ENCODE measurements at regions of chr16 and their contacts with region 1.

Region 1: DNA sequence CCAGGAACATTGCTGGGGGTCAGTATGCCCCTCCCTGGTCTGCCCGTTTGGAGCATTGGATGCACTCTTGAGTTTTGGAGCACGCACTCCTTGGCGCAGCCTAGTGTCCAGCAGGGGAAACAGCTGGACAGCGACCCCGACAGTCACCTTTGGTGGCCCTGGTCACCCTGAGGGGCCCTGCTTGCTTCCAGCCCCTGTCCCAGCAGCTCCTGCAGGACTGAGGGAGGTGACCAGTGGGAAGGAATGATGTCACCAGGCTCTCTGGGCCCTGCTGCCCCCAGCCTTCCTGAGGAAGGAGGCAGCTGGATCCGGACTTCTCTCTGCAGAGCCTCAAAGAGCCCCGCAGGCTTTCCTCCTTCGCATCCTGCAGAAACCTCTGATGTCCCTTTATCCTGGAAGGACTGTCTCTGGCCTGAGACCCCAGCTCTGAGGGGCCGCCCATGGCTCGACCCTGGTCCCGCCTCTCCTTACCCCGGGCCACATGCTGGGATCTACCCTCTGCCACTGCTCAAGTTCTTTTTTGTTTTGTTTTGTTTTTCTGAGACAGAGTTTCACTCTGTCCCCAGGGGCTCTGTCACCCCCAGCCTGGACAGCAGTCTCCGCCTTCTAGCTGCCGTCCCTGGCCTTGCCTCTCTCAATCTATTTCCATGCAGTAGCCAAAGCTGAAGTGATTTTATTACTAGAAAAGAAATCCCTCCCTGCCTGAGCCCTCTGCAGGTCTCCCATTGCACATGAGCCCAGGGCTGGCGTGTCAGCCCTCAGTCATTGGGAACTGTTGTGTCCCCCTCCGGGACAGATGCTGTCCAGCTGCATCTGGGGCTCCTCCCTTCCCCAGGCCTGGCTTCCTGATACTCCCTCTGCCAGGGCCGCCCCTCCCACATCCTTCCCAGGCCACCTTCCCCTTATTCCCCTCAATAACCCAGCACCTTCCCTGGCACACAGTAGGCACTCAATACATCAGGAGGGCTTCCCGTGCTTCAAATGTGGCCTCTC is 11.6 kb downstream of the ZSCAN10 start:
- DNase-seq: no peak
- ATAC-seq: peak; percentile 84
- H3K4me3 ChIP-seq: peak overlapping the region; percentile 51 to 79 (median 63)
- H3K27ac ChIP-seq: peak overlapping the region; percentile 59
- H3K4me1 ChIP-seq: peaks cover 46% of the 10 kb centered on the region
- H3K27me3 ChIP-seq: peaks cover 0 to 5% of the 10 kb centered on the region in 2 experiments; a peak in 2 of 5 replicates
- CTCF ChIP-seq: peak; percentile 89
- EP300 ChIP-seq: no peak
- POLR2A ChIP-seq: no peak
- RAD21 ChIP-seq: peak; percentile 36

Region 2: GRCh38 chr16:3065069-3065741 is 22.3 kb before region 1 on chr16 and contains the start of gene IL32:
- CTCF ChIA-PET with region 1: no interaction called
- POLR2A ChIA-PET with region 1: interaction called, 38 read pairs
- in situ Hi-C with region 1: no loop called
- intact Hi-C with region 1: no loop called
- DNase-seq: peak; percentile 87
- ATAC-seq: peak; percentile 77
- H3K4me3 ChIP-seq: peak within 1 kb of the TSS; percentile 57 to 90 (median 71)
- H3K27ac ChIP-seq: peak within 1 kb of the TSS; percentile 82
- H3K4me1 ChIP-seq: peaks cover 37% of the 10 kb centered on the region
- H3K27me3 ChIP-seq: no peaks in the 10 kb centered on the region; a peak in 2 of 5 replicates
- CTCF ChIP-seq: 0 out of 2 replicates have a peak, but pooled peaks have one; percentile 8
- EP300 ChIP-seq: peak in 1 of 2 experiments; percentile 59; a peak in 2 of 4 replicates
- POLR2A ChIP-seq: peak; percentile 72 to 75
- RAD21 ChIP-seq: no peak
- total RNA-seq, gene IL32: 115 and 127 TPM in 2 replicates

Region 3: DNA sequence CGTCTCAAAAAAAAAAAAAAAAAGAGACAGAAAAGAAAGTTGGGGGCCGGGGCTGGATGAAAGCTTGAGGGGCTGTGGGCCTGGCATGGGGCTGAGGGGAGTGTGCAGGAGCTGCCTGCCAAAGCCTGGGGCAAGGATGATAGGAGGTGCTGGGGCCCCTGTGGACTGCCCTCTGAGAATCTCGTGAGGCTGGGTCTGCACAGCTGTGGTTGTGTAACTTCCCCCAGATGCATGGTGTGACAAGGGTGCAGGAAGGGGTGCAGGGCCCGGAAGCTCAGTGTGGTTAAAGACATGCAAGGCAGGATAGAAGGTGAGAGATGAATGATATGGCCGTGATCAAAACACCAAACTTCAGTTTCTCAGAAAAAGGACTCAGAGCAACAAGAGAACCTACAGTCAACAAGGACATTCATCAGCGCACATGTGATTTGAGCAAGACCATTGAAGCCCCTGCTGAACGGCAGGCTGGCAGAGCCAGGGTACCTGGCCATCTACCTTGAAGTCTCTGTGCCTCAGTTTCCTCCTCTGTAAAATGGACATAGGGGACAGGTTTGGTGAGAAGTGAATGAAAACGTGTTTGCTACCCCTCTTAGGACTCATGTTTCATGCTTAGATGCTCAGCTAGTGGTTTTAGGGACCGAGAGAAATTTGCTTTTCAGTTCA is 12.5 kb before region 1 on chr16:
- CTCF ChIA-PET with region 1: no interaction called
- POLR2A ChIA-PET with region 1: interaction called, 11 read pairs
- in situ Hi-C with region 1: no loop called
- intact Hi-C with region 1: no loop called
- DNase-seq: no peak
- ATAC-seq: no peak
- H3K4me3 ChIP-seq: no peak overlapping the region
- H3K27ac ChIP-seq: no peak overlapping the region
- H3K4me1 ChIP-seq: peaks cover 9% of the 10 kb centered on the region
- H3K27me3 ChIP-seq: peaks cover 2 to 16% of the 10 kb centered on the region in 2 experiments; a peak in 3 of 5 replicates
- CTCF ChIP-seq: no peak
- EP300 ChIP-seq: no peak
- POLR2A ChIP-seq: no peak
- RAD21 ChIP-seq: no peak

Region 4: GRCh38 chr16:3099732-3100499 is 12.4 kb after region 1 on chr16:
- CTCF ChIA-PET with region 1: interaction called, 4 read pairs
- POLR2A ChIA-PET with region 1: interaction called, 17 read pairs
- in situ Hi-C with region 1: no loop called
- intact Hi-C with region 1: no loop called
- DNase-seq: peak; percentile 81
- ATAC-seq: peak; percentile 75
- H3K4me3 ChIP-seq: peak overlapping the region in 2 of 3 experiments; percentile 5 to 62; a peak in 2 of 6 replicates
- H3K27ac ChIP-seq: no peak overlapping the region
- H3K4me1 ChIP-seq: peaks cover 59% of the 10 kb centered on the region
- H3K27me3 ChIP-seq: peaks cover 0 to 13% of the 10 kb centered on the region in 2 experiments; a peak in 2 of 5 replicates
- CTCF ChIP-seq: no peak
- EP300 ChIP-seq: no peak
- POLR2A ChIP-seq: peak in 1 of 2 experiments; percentile 58; a peak in 1 of 4 replicates
- RAD21 ChIP-seq: no peak

Measured in HepG2 (cell line).